ENCODE measurements at regions of chr15 and their contacts with region 1.

Region 1: DNA sequence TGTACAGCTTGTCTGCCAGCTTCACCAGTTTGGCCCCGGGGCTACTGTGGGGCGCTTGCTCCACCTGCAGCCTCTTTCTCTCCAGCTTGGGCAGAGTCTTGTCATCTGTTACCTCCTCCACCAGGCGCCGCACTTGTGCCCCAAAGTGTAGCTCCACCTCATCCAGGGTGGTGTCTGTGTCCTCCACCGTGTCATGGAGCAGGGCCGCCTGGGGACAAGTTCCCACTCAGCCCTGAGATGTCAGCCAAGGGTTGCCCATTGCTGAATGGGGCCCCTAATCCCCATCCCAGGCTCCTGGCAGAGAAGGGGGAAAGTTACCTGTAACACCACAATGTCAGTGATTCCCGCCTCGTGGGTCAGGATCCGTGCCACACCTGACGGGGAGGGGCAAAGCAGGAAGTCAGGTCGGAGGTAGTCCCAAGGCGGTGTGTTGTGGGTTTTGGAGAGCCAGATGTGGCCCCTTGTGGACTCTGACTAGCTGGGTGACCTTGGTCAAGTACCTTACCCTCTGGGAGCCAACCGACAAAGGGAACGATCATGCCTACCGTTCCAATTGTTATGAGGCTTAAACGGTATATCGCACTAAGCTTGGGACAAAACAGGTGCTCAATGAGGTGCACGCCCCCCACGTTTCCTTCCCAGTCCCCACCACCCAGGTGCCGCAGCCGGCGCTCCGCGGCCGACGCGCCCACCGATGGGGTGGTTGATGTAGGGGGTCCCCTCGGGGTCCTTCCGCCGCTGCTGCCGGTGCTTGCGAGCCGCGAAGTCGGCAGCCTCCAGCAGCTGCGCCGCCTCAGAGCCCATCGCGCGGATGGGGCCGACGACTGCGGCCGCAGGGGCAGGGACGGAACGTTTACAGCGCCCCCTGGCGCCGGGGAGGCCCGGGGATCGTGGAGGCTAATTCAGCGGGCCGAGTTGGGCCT is at the start of gene HDDC3:
- DNase-seq: no peak
- H3K4me3 ChIP-seq: peak within 1 kb of the TSS; percentile 90
- CTCF ChIP-seq: peak; percentile 98

Region 2: DNA sequence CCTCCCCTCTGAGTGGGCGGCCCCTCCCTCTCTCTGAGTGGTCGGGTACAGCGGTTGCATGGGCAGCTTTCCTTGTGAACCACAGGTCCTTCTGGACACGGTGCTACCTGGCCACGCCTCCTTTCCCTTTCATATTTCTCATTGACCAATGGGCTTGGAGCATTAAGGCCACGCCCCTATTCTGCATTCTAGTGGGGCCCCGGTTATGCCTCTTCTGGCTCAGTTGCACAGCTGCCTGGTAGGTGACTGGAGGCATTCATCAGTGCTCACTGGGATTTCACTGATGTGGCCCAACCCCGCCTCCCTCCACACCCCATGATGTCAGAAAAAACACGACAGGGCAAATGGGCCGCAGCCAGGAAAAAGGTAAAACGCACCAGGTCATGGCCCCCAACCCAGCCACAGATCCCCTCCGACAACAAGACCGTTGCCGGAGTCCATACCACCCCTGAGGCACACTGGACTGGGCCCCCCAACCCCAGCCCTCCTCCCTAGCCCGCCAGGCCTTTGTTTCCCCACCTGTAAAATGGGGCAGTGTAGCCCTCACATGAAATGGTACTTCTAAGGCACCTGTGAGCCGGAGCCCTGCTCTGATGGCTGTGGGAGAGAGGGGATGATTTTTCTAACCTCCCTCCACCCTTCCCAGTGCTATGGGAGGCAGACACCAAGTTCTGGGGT is 640.2 kb before region 1 on chr15:
- CTCF ChIA-PET with region 1: interaction called, 12 read pairs
- POLR2A ChIA-PET with region 1: no interaction called
- DNase-seq: no peak
- H3K4me3 ChIP-seq: no peak overlapping the region
- CTCF ChIP-seq: no peak

Region 3: DNA sequence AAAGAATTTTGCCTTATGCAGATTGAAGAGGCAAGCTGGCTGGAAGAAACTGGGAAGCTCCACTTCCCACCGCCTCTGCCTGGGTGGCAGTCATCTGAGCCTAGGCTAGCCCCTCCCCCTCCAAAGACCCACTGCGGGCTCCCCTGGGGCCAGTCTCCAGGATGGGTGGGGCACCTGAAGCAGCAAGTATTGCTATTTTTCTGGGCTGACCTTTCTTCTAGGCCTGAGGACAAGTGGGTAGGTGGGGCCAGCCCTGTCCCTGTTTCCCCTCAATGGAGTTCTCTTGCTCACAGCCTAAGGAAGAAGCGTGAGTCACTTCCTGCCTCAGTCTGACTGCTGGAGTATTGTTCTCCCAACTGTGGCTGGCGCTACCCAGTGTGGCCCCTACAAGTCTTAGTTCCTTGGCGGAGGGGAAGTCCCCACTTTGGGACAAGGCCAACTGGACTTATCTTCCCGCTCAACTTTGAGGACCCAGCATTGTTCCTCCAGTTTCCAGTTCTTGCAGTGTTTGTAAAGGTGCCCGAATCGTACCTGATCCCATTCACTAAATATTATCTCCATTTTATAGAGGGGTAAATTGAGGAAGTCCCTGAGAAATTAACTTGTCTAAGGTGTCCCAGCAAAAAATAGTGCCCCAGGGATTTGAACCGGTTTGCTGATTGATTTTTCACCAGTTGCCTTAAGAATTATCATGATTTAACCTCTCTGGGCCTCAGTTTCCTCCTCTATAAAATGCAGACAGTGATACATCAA is 62.2 kb before region 1 on chr15:
- CTCF ChIA-PET with region 1: interaction called, 11 read pairs
- POLR2A ChIA-PET with region 1: no interaction called
- DNase-seq: no peak
- H3K4me3 ChIP-seq: no peak overlapping the region; the same call in 1 of the 2 replicates
- CTCF ChIP-seq: no peak

Region 4: GRCh38 chr15:90902040-90902839 is 29.8 kb before region 1 on chr15:
- CTCF ChIA-PET with region 1: interaction called, 186 read pairs
- POLR2A ChIA-PET with region 1: interaction called, 4 read pairs
- DNase-seq: peak; percentile 21
- H3K4me3 ChIP-seq: peak overlapping the region; percentile 76
- CTCF ChIP-seq: peak; percentile 82

Region 5: DNA sequence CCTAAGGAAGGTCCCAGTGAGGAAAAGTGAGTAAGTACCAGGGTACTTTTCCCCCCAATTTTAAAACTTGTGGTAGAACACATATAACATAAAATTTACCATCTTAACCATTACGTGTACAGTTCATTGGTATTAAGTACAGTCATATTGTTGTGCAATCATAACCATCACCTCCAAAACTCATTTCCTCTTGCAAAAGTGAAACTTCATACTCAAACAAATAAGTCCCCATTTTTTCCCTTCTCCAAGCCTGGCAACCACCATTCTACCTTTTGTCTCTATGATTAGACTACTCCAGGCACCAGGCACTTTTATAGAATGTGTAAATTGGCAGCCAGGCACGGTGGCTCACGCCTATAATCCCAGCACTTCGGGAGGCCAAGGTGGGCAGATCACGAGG is 50.1 kb after region 1 on chr15:
- CTCF ChIA-PET with region 1: interaction called, 15 read pairs
- POLR2A ChIA-PET with region 1: no interaction called
- DNase-seq: no peak
- H3K4me3 ChIP-seq: no peak overlapping the region
- CTCF ChIP-seq: no peak

Region 6: GRCh38 chr15:91271565-91272153 is 339.7 kb after region 1 on chr15:
- CTCF ChIA-PET with region 1: interaction called, 10 read pairs
- POLR2A ChIA-PET with region 1: no interaction called
- DNase-seq: peak; percentile 10
- H3K4me3 ChIP-seq: no peak overlapping the region
- CTCF ChIP-seq: peak; percentile 55

Measured in AG04449 (cell line).